Breast epithelium (tissue), 4 donors: ENCODE measurements at regions of chr17 and their contacts with region 1.

Region 1: DNA sequence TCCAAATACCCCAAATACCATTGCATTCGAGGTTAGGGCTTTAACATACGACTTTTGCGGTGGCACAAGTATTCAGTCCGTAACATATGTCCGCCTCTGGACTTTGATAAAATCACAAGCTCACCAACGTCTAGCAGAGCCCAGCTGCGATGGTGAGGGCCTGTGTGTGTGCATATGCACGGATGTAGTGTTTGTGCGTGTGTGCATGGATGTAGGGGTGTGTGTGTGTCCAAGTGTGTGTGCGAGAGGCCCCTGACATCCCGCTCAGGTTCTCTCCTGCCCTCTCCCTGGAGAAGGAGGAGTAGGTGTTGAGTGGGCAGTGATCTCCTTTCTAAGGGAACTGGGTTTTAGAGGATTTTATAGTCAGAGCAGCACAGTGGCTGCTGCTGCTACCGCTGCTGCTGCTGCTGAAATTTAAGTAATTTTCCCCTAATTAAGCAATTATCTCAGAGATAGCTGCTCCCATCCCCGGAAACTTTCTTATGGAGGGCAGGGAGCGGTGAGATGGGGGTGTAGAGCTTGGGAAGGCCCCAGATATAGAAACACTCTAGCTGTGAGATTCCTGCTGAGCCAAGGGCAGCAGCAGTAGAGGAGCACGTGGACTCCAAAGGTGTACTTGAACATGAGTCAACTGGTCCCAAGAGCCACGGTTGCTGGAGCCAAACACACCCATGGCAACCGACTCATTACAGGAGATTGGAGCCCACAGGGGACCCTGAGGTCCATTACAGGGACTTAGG is 121.7 kb upstream of the SDK2 start:
- DNase-seq: no peak
- H3K4me3 ChIP-seq: no peak overlapping the region
- H3K27ac ChIP-seq: no peak overlapping the region
- H3K4me1 ChIP-seq: peaks cover 0 to 5% of the 10 kb centered on the region in 2 donors
- H3K27me3 ChIP-seq: no peaks in the 10 kb centered on the region
- CTCF ChIP-seq: no peak
- POLR2A ChIP-seq: no peak

Region 2: GRCh38 chr17:72297326-72298115 is 1468.5 kb before region 1 on chr17:
- intact Hi-C with region 1: no loop called
- DNase-seq: no peak
- H3K4me3 ChIP-seq: no peak overlapping the region
- H3K27ac ChIP-seq: no peak overlapping the region
- H3K4me1 ChIP-seq: no peaks in the 10 kb centered on the region
- H3K27me3 ChIP-seq: no peaks in the 10 kb centered on the region
- CTCF ChIP-seq: no peak
- POLR2A ChIP-seq: no peak

Region 3: GRCh38 chr17:73901661-73902415 is 135.8 kb after region 1 on chr17:
- intact Hi-C with region 1: no loop called
- DNase-seq: peak in 1 of 2 donors; percentile 30
- H3K4me3 ChIP-seq: peak overlapping the region; percentile 14 to 61 (median 48)
- H3K27ac ChIP-seq: no peak overlapping the region
- H3K4me1 ChIP-seq: no peaks in the 10 kb centered on the region
- H3K27me3 ChIP-seq: peaks cover 0 to 36% of the 10 kb centered on the region in 2 donors
- CTCF ChIP-seq: no peak
- POLR2A ChIP-seq: no peak

Region 4: DNA sequence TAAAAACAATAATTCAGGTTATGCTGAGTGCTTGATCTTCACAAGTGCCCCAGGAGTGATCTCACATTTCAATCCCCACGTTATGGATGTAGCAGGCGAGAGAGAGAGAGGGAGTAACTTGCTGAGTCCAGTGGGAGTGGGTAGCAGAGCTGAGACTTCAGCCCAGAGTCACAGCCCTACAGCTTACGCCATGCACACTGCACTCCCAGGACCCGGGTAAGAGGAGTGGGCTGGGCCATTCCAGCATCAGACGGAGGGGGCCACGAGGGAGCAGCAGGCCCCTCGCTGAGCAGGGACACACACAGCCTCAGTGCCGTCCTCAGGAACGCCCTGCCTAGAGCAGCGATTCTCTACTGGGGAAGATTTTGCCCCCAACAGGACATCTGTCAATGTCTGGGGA is 550.2 kb after region 1 on chr17:
- intact Hi-C with region 1: loop called (anchors 5 kb)
- DNase-seq: no peak
- H3K4me3 ChIP-seq: no peak overlapping the region
- H3K27ac ChIP-seq: no peak overlapping the region
- H3K4me1 ChIP-seq: no peaks in the 10 kb centered on the region
- H3K27me3 ChIP-seq: peaks cover 0 to 3% of the 10 kb centered on the region in 2 donors
- CTCF ChIP-seq: no peak
- POLR2A ChIP-seq: no peak